B cell (primary cell): ENCODE measurements at regions of chr12 and their contacts with region 1.

Region 1: DNA sequence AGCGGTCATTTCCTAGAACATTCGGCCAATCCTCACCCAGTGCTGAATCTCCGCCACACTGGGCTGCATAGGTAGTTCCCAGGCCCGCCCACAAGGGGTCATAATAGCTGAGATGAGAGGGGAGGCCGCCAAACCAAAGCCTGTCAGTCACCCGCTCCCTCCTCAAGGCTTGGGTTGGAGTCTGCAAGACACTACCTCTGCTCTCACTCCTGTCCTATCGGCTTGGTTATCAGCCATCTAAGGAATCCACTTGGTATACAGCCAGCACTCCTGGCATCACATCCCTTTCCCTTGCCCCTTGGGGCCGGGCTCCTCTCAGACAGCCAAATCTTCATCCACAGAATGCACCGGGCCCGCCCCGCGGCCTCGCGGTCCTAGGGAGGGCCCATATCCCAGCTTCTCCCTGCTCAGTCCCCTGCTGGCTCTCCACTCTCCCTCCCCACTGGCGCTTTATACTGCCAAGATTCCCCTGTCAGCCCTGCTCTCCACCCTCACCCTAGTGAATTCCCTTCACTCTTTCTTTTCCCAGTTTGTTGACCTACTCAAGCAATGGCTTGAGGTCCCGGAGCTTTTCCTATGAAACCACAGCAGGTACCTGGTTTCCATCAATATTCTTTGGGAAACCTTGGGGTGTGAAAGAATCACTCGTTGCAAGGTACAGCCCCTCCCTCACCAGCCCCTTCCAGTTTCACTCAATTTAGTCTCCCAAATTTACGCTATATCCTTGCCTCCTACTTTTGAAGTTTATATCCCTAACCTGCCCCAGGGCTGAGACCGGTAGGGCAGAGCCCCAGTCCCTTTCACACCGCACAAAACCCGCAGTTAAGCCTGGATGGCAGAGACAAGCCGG is 1.4 kb downstream of the IFFO1 start:
- DNase-seq: peak; percentile 82
- ATAC-seq: peak; percentile 70
- H3K4me3 ChIP-seq: peak overlapping the region in 4 of 5 experiments; percentile 52 to 93 (median 84)
- H3K4me3 Mint-ChIP-seq: peak overlapping the region; percentile 89
- H3K27ac ChIP-seq: no peak overlapping the region
- H3K27ac Mint-ChIP-seq: peak overlapping the region; percentile 67
- H3K4me1 ChIP-seq: peaks cover 12 to 38% of the 10 kb centered on the region in 2 donors
- H3K4me1 Mint-ChIP-seq: peaks cover 36% of the 10 kb centered on the region
- H3K27me3 ChIP-seq: no peaks in the 10 kb centered on the region
- H3K27me3 Mint-ChIP-seq: no peaks in the 10 kb centered on the region
- CTCF ChIP-seq: peak; percentile 81

Region 2: DNA sequence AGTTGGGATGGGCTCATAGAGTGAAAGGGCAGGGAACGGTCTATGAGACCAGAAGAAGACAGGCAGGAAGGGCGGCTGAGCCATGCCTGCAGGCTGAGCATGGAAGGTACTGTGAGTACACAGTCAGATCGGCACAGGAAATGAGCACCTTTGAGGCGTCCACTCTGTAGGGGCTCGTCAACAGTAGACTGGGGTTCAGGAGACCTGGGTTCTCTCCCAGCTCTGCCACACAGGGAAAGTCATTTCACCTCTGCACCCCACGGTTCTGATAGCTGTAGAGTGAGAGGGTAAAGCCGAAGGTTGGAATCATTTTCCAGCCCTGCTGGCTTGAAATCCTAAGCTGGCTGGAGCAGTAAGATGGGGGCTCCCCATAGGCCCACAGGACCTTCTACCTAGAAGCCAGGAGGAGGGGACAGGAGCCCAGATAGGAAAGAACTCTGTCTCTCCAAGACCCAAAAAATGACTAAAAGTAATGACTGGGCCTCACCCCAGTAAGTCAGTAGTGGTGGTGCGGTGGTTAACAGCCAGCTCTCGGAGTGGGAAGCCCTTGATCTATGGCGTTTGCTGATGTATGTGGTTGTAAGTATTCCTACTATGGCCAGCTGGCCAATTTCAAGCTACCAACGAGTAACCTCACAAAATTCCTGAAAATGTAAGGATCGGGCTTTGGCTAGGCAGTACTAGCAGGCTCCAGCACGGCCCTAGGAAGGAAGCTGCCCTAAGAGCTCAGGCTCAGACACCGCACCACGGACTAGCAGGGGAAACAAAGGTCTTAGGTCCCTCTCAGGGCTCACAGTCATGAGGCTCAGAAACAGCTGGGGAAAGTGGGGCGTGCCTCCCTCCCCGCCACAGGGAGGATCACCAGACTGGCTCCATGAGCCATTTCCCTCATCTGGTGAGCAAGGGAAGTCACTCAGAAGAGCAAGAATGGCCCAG is 119.9 kb before region 1 on chr12:
- CTCF ChIA-PET with region 1: no interaction called
- POLR2A ChIA-PET with region 1: no interaction called
- intact Hi-C with region 1: no loop called
- DNase-seq: no peak
- ATAC-seq: peak; percentile 19
- H3K4me3 ChIP-seq: peak overlapping the region in 1 of 5 experiments; percentile 25
- H3K4me3 Mint-ChIP-seq: no peak overlapping the region
- H3K27ac ChIP-seq: no peak overlapping the region
- H3K27ac Mint-ChIP-seq: peak overlapping the region; percentile 65
- H3K4me1 ChIP-seq: peaks cover 25 to 42% of the 10 kb centered on the region in 2 donors
- H3K4me1 Mint-ChIP-seq: peaks cover 37% of the 10 kb centered on the region
- H3K27me3 ChIP-seq: no peaks in the 10 kb centered on the region
- H3K27me3 Mint-ChIP-seq: no peaks in the 10 kb centered on the region
- CTCF ChIP-seq: no peak

Region 3: DNA sequence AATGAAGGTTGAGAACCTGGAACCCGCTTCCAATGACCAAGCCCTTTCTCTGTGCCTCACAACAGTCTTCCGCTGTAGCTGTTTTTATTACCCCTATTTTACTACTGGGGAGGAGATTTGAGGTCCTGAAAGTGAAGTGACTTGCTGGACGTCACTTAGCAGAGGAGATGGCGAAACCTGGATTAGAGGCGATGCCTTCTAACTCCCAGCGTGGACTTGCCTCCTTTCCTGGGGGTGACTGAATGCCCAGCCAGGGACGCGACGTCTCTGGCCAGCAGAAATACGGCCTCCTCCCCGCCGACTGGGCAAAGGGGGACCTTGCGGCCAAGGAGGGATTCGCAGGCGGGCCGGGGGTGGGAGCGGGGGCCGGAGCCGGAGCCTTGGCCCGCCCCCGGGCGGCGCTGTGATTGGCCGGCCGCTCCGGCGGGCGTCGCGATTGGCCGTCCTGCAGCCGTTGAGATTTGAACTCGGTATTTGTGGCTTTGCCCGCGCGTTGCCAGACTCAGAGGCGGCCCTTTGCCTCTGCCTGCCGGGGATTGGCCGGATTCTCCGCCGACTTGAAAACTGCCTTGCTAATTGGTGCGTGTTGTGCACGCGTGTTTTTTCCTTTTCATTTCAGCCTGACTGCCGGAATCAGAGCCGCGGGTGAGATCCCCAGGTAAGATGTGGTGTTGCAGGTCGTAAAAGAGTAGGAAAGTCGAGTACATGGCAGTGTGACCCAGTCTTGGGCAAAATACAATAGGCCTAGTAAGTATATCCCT is 60.7 kb before region 1 on chr12 and contains the start of gene NCAPD2:
- CTCF ChIA-PET with region 1: interaction called, 3 read pairs
- POLR2A ChIA-PET with region 1: interaction called, 3 read pairs
- intact Hi-C with region 1: loop called (anchors 1 kb)
- DNase-seq: peak; percentile 97
- ATAC-seq: peak; percentile 86
- H3K4me3 ChIP-seq: peak within 1 kb of the TSS; percentile 68 to 100 (median 95)
- H3K4me3 Mint-ChIP-seq: peak within 1 kb of the TSS; percentile 98
- H3K27ac ChIP-seq: peak within 1 kb of the TSS; percentile 92 to 95
- H3K27ac Mint-ChIP-seq: peak within 1 kb of the TSS; percentile 95
- H3K4me1 ChIP-seq: peaks cover 22 to 27% of the 10 kb centered on the region in 2 donors
- H3K4me1 Mint-ChIP-seq: peaks cover 31% of the 10 kb centered on the region
- H3K27me3 ChIP-seq: no peaks in the 10 kb centered on the region
- H3K27me3 Mint-ChIP-seq: no peaks in the 10 kb centered on the region
- CTCF ChIP-seq: peak; percentile 22
- total RNA-seq, gene NCAPD2: 41.1 and 42.1 TPM in 2 replicates

Region 4: DNA sequence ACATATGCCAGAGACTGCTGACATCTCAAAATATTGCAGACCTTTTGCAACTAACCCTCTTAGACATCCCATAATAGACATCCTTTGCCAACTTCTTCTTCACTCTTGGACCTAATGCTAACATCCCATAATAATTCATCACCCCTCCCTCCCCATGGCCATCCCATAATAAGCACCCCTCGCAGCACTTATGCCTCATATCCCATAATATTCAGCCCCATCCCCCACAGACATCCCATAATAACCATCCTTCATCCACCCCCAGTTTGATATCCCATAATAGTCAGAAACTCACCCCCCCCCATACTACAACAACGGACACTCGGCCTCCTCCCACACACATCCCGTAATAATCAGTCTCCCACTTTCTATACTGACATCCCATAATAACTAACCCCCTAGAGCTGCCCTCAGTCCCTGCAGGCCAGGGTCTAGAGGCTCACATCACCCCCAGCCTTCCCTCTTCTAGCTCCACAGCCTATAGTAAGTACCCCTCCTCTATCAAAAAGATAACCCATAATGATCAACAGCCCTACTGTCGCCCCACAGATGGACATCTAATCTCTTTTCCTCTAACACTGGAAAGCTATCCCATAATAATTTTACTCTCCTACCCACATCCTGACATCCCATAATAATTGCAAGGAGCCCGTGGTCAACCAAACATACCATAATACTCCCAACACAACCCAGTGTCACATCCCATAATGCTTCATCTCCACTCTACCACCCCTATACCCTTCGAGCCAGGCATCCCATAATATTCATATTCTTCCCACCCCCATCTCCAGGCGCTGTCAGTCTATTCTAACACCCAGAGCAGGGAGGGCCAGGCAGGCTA is 53.6 kb after region 1 on chr12:
- CTCF ChIA-PET with region 1: interaction called, 5 read pairs
- POLR2A ChIA-PET with region 1: no interaction called
- intact Hi-C with region 1: loop called (anchors 1 kb)
- DNase-seq: peak; percentile 90
- ATAC-seq: peak; percentile 20
- H3K4me3 ChIP-seq: no peak overlapping the region
- H3K4me3 Mint-ChIP-seq: no peak overlapping the region
- H3K27ac ChIP-seq: peak overlapping the region; percentile 90 to 95
- H3K27ac Mint-ChIP-seq: no peak overlapping the region
- H3K4me1 ChIP-seq: peaks cover 56 to 63% of the 10 kb centered on the region in 2 donors
- H3K4me1 Mint-ChIP-seq: peaks cover 58% of the 10 kb centered on the region
- H3K27me3 ChIP-seq: no peaks in the 10 kb centered on the region
- H3K27me3 Mint-ChIP-seq: no peaks in the 10 kb centered on the region
- CTCF ChIP-seq: no peak